ENCODE measurements at regions of chr9 and their contacts with region 1.

Region 1: DNA sequence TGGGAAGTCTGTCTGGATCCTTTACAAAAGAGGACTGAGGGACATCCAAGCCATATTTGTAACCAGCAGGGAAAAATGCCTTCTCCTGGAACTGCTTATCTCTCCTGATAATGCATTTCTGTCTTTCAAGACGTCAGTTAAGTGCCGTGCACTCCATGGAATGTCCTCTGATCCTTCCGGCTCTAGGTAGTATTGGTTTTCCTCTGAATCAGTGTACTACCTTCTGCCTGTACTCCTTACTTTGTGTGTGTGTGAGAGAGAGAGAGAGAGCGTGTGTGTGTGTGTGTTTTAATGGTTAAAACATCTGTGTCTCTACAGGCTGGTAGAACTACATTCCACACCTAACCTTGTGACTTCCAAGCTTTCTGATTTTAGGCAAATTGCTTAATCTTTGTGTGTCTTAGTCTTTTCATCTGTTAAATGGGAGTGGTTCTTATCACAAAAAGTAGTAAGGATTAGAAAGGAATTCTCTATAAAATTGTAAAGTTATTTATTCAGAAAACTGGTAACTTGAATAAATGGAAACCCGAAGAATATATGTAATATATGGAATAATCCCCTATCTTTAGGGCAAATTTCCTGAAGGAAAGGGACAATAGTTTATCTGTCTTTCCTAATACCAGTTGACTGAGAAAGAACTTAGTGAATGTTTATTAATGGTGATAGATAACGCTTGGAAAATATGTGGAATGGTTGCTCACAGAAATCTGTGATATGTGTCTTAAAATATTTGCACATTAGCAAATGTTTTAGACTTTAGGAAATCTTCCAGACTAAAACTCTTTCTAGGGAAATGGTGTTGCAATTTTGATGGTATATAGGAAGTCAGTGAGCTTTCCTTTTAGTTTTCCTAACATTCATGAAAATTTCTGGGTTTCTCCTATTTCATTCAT is 90.1 kb downstream of the PIP5K1B start:
- DNase-seq: peak; percentile 61 to 81
- H3K4me3 ChIP-seq: no peak overlapping the region
- H3K4me3 Mint-ChIP-seq: no peak overlapping the region
- H3K27ac Mint-ChIP-seq: no peak overlapping the region
- H3K4me1 ChIP-seq: peaks cover 9% of the 10 kb centered on the region; the same call in 1 of the 2 replicates
- H3K4me1 Mint-ChIP-seq: peaks cover 9% of the 10 kb centered on the region
- H3K27me3 ChIP-seq: no peaks in the 10 kb centered on the region
- H3K27me3 Mint-ChIP-seq: no peaks in the 10 kb centered on the region
- CTCF ChIP-seq: no peak

Region 2: DNA sequence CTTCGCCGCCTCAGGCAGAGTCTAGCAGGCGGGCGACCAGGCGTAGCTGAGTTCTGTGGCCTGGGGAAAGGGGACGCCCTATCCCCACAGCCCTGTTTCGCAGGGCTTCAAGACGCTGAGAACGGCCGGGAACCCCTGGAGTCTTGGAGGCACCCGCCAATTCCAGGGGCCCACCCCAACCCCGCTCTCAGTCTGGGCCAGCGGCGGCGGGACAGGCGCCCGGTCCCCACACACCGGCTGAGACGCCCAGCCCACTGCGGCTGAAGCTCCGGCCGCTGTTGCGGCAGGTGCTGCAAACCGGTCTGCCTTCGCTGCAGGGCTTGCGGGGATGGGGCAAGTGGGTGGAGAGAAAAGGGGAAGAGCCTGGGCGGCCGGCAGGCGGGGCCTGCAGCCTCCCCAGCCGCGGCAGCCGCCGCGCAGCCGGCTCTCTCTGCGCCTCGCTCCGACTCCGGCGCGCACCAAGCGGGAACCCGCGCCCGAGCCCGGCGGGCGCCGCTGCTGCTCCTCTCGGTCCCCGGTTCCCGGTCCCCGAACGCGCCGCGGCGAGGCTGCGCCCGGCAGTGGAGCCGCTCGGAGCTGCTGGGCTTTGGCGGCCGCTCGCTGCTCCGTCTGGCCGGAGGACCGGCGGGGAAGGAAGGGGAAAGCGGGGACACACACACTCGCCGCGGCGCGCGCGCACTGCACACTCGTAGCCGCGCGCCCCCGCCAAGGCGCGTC is 90.2 kb before region 1 on chr9 and contains the start of gene PIP5K1B:
- CTCF ChIA-PET with region 1: no interaction called
- POLR2A ChIA-PET with region 1: no interaction called
- intact Hi-C with region 1: loop called (anchors 5 kb)
- DNase-seq: peak; percentile 72 to 80
- H3K4me3 ChIP-seq: peak within 1 kb of the TSS; percentile 54
- H3K4me3 Mint-ChIP-seq: peak within 1 kb of the TSS; percentile 88
- H3K27ac Mint-ChIP-seq: peak within 1 kb of the TSS; percentile 57
- H3K4me1 ChIP-seq: no peaks in the 10 kb centered on the region
- H3K4me1 Mint-ChIP-seq: no peaks in the 10 kb centered on the region
- H3K27me3 ChIP-seq: no peaks in the 10 kb centered on the region
- H3K27me3 Mint-ChIP-seq: no peaks in the 10 kb centered on the region
- CTCF ChIP-seq: no peak
- total RNA-seq, gene PIP5K1B: 10.3 and 12.9 TPM in 2 replicates

Region 3: GRCh38 chr9:68731857-68732256 is 63.3 kb before region 1 on chr9:
- CTCF ChIA-PET with region 1: no interaction called
- POLR2A ChIA-PET with region 1: no interaction called
- intact Hi-C with region 1: loop called (anchors 5 kb)
- DNase-seq: no peak
- H3K4me3 ChIP-seq: no peak overlapping the region
- H3K4me3 Mint-ChIP-seq: peak overlapping the region; percentile 64
- H3K27ac Mint-ChIP-seq: peak overlapping the region; percentile 76
- H3K4me1 ChIP-seq: no peaks in the 10 kb centered on the region
- H3K4me1 Mint-ChIP-seq: peaks cover 17% of the 10 kb centered on the region
- H3K27me3 ChIP-seq: no peaks in the 10 kb centered on the region
- H3K27me3 Mint-ChIP-seq: no peaks in the 10 kb centered on the region
- CTCF ChIP-seq: no peak

Region 4: GRCh38 chr9:68779558-68780384 is 15.4 kb before region 1 on chr9:
- CTCF ChIA-PET with region 1: no interaction called
- POLR2A ChIA-PET with region 1: no interaction called
- intact Hi-C with region 1: loop called (anchors 1 kb)
- DNase-seq: peak; percentile 81 to 82
- H3K4me3 ChIP-seq: peak overlapping the region; percentile 53
- H3K4me3 Mint-ChIP-seq: no peak overlapping the region
- H3K27ac Mint-ChIP-seq: no peak overlapping the region
- H3K4me1 ChIP-seq: no peaks in the 10 kb centered on the region
- H3K4me1 Mint-ChIP-seq: peaks cover 6% of the 10 kb centered on the region
- H3K27me3 ChIP-seq: no peaks in the 10 kb centered on the region
- H3K27me3 Mint-ChIP-seq: no peaks in the 10 kb centered on the region
- CTCF ChIP-seq: no peak

Measured in Caco-2 (cell line).